ENCODE measurements at regions of chr1 and their contacts with region 1.

Region 1: DNA sequence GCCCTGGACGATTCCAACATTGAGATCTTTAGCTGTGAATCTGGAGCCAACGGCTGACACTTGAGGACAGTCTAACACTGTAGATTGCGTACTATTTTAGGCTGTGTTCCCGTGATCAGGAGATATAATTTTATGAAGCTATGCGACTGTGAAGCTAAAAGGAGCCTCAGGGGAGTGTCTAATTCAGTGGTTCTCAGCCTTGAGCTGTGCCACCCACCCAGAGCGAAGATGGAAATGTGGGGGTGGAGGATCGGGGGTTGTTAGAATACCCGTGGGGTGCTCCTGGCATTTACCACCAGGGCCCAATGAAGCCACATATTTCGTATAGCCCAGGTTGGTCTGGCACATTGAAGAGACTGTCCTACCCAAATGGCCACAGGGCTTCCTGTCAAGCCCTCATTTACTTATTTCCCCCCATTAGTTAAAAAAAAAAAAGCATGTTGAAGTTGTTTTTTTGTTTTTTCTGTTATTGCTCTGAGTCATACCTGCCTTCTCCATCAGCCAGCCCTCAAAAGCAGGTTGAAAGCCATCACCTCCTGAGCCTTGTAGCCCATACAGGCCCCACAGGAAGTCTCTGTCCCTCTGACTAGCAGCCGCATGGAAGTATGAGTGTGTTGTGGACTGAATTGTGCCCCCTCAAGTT is 141.7 kb downstream of the GALNT2 start:
- DNase-seq: peak in 6 of 9 experiments; percentile 25 to 66 (median 52)
- ATAC-seq: peak; percentile 83
- H3K4me3 ChIP-seq: no peak overlapping the region
- H3K4me3 Mint-ChIP-seq: no peak overlapping the region
- H3K27ac ChIP-seq: peak overlapping the region in 1 of 2 experiments; percentile 55
- H3K27ac Mint-ChIP-seq: peak overlapping the region; percentile 89
- H3K4me1 ChIP-seq: peaks cover 21% of the 10 kb centered on the region
- H3K4me1 Mint-ChIP-seq: peaks cover 45% of the 10 kb centered on the region
- H3K27me3 ChIP-seq: no peaks in the 10 kb centered on the region
- H3K27me3 Mint-ChIP-seq: no peaks in the 10 kb centered on the region
- CTCF ChIP-seq: no peak

Region 2: GRCh38 chr1:230270559-230271281 is 62.0 kb after region 1 on chr1:
- CTCF ChIA-PET with region 1: no interaction called
- POLR2A ChIA-PET with region 1: no interaction called
- intact Hi-C with region 1: loop called in 1 of 2 experiments (anchors 10 kb)
- DNase-seq: peak in 1 of 9 experiments; percentile 23
- ATAC-seq: peak; percentile 31
- H3K4me3 ChIP-seq: no peak overlapping the region
- H3K4me3 Mint-ChIP-seq: peak overlapping the region; percentile 55
- H3K27ac ChIP-seq: peak overlapping the region in 1 of 2 experiments; percentile 12
- H3K27ac Mint-ChIP-seq: peak overlapping the region; percentile 83
- H3K4me1 ChIP-seq: peaks cover 34% of the 10 kb centered on the region
- H3K4me1 Mint-ChIP-seq: peaks cover 51% of the 10 kb centered on the region
- H3K27me3 ChIP-seq: no peaks in the 10 kb centered on the region
- H3K27me3 Mint-ChIP-seq: no peaks in the 10 kb centered on the region
- CTCF ChIP-seq: no peak

Region 3: DNA sequence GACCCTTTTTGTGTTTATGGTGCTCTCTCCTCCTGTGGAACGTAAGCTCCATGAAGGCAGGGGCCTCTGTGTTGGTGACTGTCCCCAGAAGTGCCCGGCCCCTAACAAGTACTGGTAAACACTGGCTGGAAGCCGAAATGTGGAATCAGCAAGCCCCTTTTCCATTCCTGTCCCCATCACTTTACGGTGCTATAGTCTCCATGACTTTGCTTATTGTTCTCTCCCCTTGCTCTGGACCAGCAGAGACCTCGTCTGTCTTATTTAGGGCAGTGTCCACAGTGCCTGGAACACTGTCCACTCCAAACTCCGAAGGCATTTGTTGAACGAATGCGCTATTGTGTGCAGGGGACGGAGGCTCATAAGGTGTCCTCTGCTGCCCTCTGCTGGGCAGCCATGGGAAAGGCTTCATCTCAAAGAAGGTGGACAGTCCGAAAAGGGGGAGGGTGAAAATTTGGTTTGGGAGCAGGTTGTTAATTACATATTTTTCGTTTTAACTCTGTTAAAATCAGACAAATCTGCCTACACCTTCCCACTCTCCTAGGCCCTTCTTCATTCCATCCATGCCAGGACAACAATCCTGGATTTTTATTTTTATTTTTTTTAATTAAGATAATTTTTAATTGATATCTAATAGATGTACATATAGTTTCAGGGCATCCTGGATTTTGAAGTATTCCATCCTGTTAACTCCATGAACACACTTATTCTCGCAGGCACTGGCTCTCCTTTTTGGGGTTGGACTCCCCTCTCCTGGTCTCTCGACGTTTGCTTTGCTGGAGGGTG is 101.8 kb after region 1 on chr1:
- CTCF ChIA-PET with region 1: interaction called, 7 read pairs
- POLR2A ChIA-PET with region 1: no interaction called
- intact Hi-C with region 1: loop called (anchors 1 to 5 kb)
- DNase-seq: peak; percentile 22 to 83 (median 63)
- ATAC-seq: no peak
- H3K4me3 ChIP-seq: no peak overlapping the region
- H3K4me3 Mint-ChIP-seq: no peak overlapping the region
- H3K27ac ChIP-seq: no peak overlapping the region
- H3K27ac Mint-ChIP-seq: no peak overlapping the region
- H3K4me1 ChIP-seq: no peaks in the 10 kb centered on the region
- H3K4me1 Mint-ChIP-seq: peaks cover 5% of the 10 kb centered on the region
- H3K27me3 ChIP-seq: no peaks in the 10 kb centered on the region
- H3K27me3 Mint-ChIP-seq: peaks cover 2% of the 10 kb centered on the region
- CTCF ChIP-seq: peak; percentile 98

Measured in CD8-positive, alpha-beta T cell (primary cell).